HCT116 (cell line): ENCODE measurements at regions of chr17 and their contacts with region 1.

Region 1: GRCh38 chr17:50783193-50783660 is 15.9 kb upstream of the ANKRD40CL start:
- DNase-seq: peak; percentile 92
- ATAC-seq: peak; percentile 99
- H3K4me3 ChIP-seq: no peak overlapping the region
- H3K27ac ChIP-seq: no peak overlapping the region
- H3K4me1 ChIP-seq: peaks cover 0 to 9% of the 10 kb centered on the region in 2 experiments; a peak in 2 of 4 replicates
- H3K27me3 ChIP-seq: no peaks in the 10 kb centered on the region
- CTCF ChIP-seq: peak; percentile 98 to 100 (median 100)
- POLR2A ChIP-seq: no peak
- RAD21 ChIP-seq: peak; percentile 100

Region 2: DNA sequence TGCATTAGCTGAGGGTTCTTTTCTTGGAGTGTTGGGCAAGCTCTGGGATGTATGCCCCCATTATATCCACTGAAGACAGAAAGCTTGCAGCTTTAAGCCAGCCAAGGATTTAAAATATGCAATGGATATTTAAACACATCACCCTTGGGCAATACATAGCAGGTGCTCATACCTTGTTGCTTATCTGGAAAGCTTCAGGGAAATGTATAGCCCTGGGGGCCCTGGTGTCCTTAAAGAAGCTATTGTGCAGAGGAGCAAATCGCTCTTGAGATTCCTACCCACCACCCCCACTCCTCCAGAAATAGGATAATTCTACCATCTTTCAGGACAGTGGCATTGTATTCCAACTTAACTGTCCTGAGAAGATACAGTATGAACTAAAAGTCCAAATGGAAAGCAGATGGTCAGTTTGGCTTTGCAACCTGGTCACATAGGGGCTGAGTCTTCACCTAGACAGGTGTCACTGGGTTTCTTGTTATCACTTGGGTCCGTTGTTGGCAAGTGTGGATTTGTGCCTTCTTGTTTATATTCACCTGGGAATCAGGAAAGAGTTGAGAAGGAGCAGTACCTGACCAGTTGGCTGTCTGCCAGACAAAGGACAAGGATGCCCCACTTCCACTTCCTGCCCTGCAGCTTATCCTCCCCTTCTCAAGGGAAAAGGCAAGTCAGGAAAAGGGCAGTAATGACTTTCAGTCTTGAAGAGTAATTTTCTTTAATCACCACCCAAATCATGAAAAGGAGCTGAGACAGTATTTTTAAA is 19.3 kb before region 1 on chr17:
- CTCF ChIA-PET with region 1: interaction called, 21 read pairs
- POLR2A ChIA-PET with region 1: no interaction called
- RAD21 ChIA-PET with region 1: no interaction called
- intact Hi-C with region 1: no loop called
- DNase-seq: no peak
- ATAC-seq: no peak
- H3K4me3 ChIP-seq: no peak overlapping the region
- H3K27ac ChIP-seq: no peak overlapping the region
- H3K4me1 ChIP-seq: peaks cover 10 to 11% of the 10 kb centered on the region in 2 experiments; a peak in 3 of 4 replicates
- H3K27me3 ChIP-seq: no peaks in the 10 kb centered on the region
- CTCF ChIP-seq: no peak
- POLR2A ChIP-seq: no peak
- RAD21 ChIP-seq: no peak

Region 3: DNA sequence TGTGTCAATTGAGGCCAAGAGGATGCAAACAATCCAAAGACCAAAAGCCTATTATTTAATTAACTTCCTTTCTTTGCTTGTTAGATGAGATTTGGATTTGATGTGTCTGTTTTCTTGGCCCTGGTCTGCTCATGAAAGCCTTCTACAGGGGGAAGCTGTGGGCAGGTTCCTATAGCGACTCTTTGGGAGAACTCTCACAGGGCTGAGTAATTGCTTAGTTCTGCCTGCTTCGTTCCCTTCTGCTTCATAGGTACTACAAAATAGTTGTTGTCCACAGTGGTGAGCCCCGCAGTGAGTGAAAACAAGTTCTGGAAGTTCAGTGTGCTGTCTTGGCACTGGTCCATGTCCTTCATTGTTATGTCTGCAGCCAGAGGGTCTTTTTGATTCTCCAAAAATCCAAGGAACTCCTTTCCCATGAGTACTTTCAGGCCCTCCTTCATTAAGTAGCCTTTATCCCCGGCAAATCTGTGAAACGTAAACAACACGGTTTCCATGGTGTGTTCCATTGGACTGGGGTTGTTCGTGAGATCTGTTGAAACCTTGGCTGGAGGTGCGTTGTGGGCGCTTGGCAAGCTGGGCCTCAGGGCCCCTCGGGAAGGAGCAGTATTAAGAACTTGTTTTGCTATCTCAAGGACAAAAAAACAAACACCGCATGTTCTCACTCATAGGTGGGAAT is 14.0 kb after region 1 on chr17:
- CTCF ChIA-PET with region 1: interaction called, 12 read pairs
- POLR2A ChIA-PET with region 1: no interaction called
- RAD21 ChIA-PET with region 1: no interaction called
- intact Hi-C with region 1: no loop called
- DNase-seq: no peak
- ATAC-seq: no peak
- H3K4me3 ChIP-seq: no peak overlapping the region
- H3K27ac ChIP-seq: no peak overlapping the region
- H3K4me1 ChIP-seq: no peaks in the 10 kb centered on the region
- H3K27me3 ChIP-seq: no peaks in the 10 kb centered on the region
- CTCF ChIP-seq: no peak
- POLR2A ChIP-seq: no peak
- RAD21 ChIP-seq: no peak

Region 4: GRCh38 chr17:50816771-50817751 is 33.8 kb after region 1 on chr17:
- CTCF ChIA-PET with region 1: interaction called, 16 read pairs
- POLR2A ChIA-PET with region 1: no interaction called
- RAD21 ChIA-PET with region 1: no interaction called
- intact Hi-C with region 1: no loop called
- DNase-seq: peak; percentile 34
- ATAC-seq: peak; percentile 86
- H3K4me3 ChIP-seq: peak overlapping the region; percentile 29 to 50
- H3K27ac ChIP-seq: peak overlapping the region; percentile 20
- H3K4me1 ChIP-seq: peaks cover 20 to 32% of the 10 kb centered on the region in 2 experiments
- H3K27me3 ChIP-seq: no peaks in the 10 kb centered on the region
- CTCF ChIP-seq: peak; percentile 73 to 100 (median 99)
- POLR2A ChIP-seq: no peak
- RAD21 ChIP-seq: peak; percentile 52

Region 5: GRCh38 chr17:50853015-50853615 is 69.9 kb after region 1 on chr17:
- CTCF ChIA-PET with region 1: interaction called, 29 read pairs
- POLR2A ChIA-PET with region 1: no interaction called
- RAD21 ChIA-PET with region 1: no interaction called
- intact Hi-C with region 1: no loop called
- DNase-seq: no peak
- ATAC-seq: no peak
- H3K4me3 ChIP-seq: no peak overlapping the region
- H3K27ac ChIP-seq: no peak overlapping the region
- H3K4me1 ChIP-seq: peaks cover 5 to 11% of the 10 kb centered on the region in 2 experiments
- H3K27me3 ChIP-seq: no peaks in the 10 kb centered on the region
- CTCF ChIP-seq: no peak
- POLR2A ChIP-seq: no peak
- RAD21 ChIP-seq: no peak

Region 6: GRCh38 chr17:50956750-50957523 is 173.7 kb after region 1 on chr17:
- CTCF ChIA-PET with region 1: interaction called, 19 read pairs
- POLR2A ChIA-PET with region 1: no interaction called
- RAD21 ChIA-PET with region 1: interaction called, 3 read pairs
- intact Hi-C with region 1: loop called (anchors 1 kb)
- DNase-seq: peak; percentile 31
- ATAC-seq: peak; percentile 89
- H3K4me3 ChIP-seq: no peak overlapping the region
- H3K27ac ChIP-seq: no peak overlapping the region
- H3K4me1 ChIP-seq: peaks cover 23 to 41% of the 10 kb centered on the region in 2 experiments
- H3K27me3 ChIP-seq: no peaks in the 10 kb centered on the region
- CTCF ChIP-seq: peak; percentile 79 to 94 (median 90)
- POLR2A ChIP-seq: no peak
- RAD21 ChIP-seq: peak; percentile 84

Region 7: DNA sequence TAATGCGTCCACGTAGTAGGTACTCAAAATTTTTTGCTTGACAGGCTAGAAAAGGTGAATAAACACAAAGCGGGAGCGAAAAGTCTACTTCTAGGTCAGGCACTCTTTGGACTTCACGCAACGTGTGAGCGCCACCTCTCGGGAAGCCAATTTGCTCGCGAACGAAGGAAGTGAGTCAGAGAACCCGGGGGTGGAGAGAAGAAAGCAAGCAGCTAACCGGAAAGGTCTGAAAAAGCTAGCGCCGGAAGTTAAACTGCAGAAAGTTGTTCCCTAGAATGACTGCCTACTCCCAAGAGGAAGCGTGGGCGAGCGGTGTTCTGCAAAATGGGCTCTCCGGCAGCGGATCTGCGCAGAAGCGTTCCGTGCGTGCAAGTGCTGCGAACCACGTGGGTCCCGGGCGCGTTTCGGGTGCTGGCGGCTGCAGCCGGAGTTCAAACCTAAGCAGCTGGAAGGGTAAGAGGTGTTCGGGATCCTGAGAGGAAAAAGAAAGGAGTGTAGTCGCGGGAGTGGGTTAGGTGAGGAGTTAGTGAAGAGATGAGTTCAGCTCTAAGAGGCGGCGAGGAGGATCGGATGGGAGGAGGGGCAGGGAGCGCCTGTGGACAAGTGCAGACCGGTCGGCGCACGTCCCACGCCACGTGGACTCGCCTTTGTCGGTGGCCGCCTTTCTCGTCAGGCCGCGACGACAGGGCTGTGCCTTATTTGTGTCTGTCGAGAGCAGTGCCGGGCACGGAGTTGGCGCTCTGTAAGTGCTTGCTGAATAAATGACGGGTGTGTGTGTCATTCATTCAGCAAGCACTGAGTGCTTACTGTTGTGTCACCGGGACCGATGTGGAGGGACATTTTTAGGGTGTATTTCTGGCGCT is 370.2 kb after region 1 on chr17 and contains the start of gene NME1:
- CTCF ChIA-PET with region 1: interaction called, 5 read pairs
- POLR2A ChIA-PET with region 1: no interaction called
- RAD21 ChIA-PET with region 1: interaction called in 1 of 2 experiments, 4 read pairs
- intact Hi-C with region 1: loop called (anchors 5 kb)
- DNase-seq: peak; percentile 100
- ATAC-seq: peak; percentile 92
- H3K4me3 ChIP-seq: peak within 1 kb of the TSS; percentile 74 to 82
- H3K27ac ChIP-seq: peak within 1 kb of the TSS; percentile 69
- H3K4me1 ChIP-seq: peaks cover 14 to 22% of the 10 kb centered on the region in 2 experiments
- H3K27me3 ChIP-seq: no peaks in the 10 kb centered on the region
- CTCF ChIP-seq: peak; percentile 97 to 100 (median 98)
- POLR2A ChIP-seq: peak; percentile 78
- RAD21 ChIP-seq: peak; percentile 100
- total RNA-seq, gene NME1: 510 TPM